Activated CD8-positive, alpha-beta memory T cell treated with anti-CD3 and anti-CD28 coated beads, Interleukin-2, amount 10 ng/mL, durations not matched to agents 7 days and 5 days (primary cell): ENCODE measurements at regions of chr4 and their contacts with region 1.

Region 1: DNA sequence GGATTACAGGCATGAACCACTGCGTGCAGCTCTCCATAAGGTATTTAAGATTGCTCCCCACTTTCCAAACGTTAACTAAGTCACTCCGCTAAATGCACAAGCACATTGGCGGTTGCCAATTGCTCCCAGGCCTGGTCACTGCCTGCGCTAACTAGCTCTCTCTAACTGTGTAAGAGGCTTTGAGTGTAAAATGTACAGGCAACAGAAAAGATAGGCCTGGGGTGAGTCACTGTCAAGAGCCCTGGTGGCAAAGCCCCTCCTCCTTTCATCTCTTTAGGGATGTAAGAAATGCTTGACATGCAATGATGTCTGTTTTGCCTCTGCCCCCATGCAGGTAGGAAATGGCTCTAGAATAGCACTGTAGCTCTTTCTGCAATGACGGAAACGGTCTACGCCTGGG is 329.7 kb upstream of the GATB start:
- DNase-seq: no peak
- ATAC-seq: no peak
- H3K4me3 Mint-ChIP-seq: no peak overlapping the region
- H3K27ac Mint-ChIP-seq: peak overlapping the region; percentile 61
- H3K4me1 Mint-ChIP-seq: peaks cover 14% of the 10 kb centered on the region
- H3K27me3 Mint-ChIP-seq: no peaks in the 10 kb centered on the region

Region 2: GRCh38 chr4:152100379-152101201 is 10.0 kb after region 1 on chr4:
- CTCF ChIA-PET with region 1: interaction called, 10 read pairs
- DNase-seq: peak; percentile 92
- ATAC-seq: peak; percentile 91
- H3K4me3 Mint-ChIP-seq: peak overlapping the region; percentile 78
- H3K27ac Mint-ChIP-seq: peak overlapping the region; percentile 100
- H3K4me1 Mint-ChIP-seq: peaks cover 61% of the 10 kb centered on the region
- H3K27me3 Mint-ChIP-seq: no peaks in the 10 kb centered on the region